AG04450 (cell line): ENCODE measurements at regions of chr14 and their contacts with region 1.

Region 1: GRCh38 chr14:77314043-77314442 is 6.6 kb downstream of the POMT2 start:
- DNase-seq: peak; percentile 76
- H3K4me3 ChIP-seq: no peak overlapping the region
- H3K27ac ChIP-seq: peak overlapping the region; percentile 58
- H3K27me3 ChIP-seq: no peaks in the 10 kb centered on the region
- CTCF ChIP-seq: no peak

Region 2: DNA sequence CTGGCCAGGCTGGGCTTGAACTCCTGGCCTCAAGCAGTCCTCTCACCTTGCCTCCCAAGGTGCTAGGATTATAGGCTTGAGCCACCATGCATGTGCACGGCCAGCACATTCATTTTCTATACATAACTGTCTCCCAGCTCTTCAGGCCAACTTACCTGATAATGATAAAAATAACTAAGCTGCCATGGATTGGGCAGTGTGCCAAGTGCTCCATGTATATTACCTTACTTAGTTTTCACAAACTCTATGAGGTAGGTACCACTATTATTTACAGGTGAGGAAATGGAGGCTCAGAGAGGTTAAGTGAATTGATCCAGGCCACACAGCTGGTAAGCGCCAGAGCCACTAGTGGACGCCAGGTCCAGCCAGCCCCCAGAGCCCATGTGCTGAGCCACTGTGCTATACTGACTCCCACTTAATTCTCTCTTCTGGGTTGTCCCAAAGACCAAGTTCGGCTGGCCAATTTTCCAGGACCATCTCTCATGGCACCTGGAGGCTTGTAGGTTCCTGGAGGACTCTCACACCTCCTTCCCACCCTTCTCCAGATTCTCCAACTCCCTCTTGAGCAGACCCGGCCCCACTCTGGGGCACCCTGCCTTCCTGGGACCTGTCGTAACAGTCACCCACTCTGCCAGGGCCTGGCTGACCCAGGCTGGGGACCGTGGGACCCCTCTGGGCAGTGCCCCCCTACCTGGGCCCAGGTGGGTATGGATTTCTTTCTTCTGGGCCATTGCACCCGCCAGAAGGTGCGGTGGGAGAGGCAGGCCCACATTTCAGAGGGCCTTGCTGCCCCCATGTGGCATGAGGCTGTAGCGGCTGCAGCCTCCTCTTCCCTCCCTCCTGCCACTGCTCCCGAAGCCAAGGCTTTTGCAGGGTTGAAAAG is 246.2 kb before region 1 on chr14:
- CTCF ChIA-PET with region 1: interaction called, 10 read pairs
- POLR2A ChIA-PET with region 1: no interaction called
- DNase-seq: peak; percentile 30
- H3K4me3 ChIP-seq: no peak overlapping the region
- H3K27ac ChIP-seq: no peak overlapping the region
- H3K27me3 ChIP-seq: no peaks in the 10 kb centered on the region
- CTCF ChIP-seq: peak; percentile 90

Region 3: GRCh38 chr14:77268989-77269600 is 44.9 kb before region 1 on chr14:
- CTCF ChIA-PET with region 1: no interaction called
- POLR2A ChIA-PET with region 1: no interaction called
- DNase-seq: no peak
- H3K4me3 ChIP-seq: no peak overlapping the region
- H3K27ac ChIP-seq: no peak overlapping the region
- H3K27me3 ChIP-seq: peaks cover 38% of the 10 kb centered on the region
- CTCF ChIP-seq: no peak

Region 4: DNA sequence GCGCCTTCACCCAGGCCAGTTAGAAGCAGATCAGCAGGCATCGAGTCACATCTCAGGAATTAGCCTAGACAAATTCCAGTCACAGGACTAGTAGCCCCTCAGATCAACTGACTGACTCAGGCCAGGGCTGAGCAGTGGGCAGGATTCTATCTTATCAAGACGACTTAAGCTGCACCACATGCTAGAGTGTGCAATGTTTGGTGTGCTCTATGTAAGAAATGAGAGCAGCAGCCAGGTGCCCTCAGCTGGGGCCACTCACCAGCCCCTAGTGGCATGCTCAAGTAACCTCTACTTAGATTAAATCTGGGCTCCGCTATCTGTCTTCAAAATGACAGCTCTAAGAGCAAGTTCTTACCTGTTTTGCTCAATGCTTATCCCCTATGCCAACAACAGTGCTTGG is 23.3 kb before region 1 on chr14:
- CTCF ChIA-PET with region 1: interaction called, 23 read pairs
- POLR2A ChIA-PET with region 1: no interaction called
- DNase-seq: peak; percentile 10
- H3K4me3 ChIP-seq: no peak overlapping the region
- H3K27ac ChIP-seq: no peak overlapping the region
- H3K27me3 ChIP-seq: no peaks in the 10 kb centered on the region
- CTCF ChIP-seq: no peak

Region 5: DNA sequence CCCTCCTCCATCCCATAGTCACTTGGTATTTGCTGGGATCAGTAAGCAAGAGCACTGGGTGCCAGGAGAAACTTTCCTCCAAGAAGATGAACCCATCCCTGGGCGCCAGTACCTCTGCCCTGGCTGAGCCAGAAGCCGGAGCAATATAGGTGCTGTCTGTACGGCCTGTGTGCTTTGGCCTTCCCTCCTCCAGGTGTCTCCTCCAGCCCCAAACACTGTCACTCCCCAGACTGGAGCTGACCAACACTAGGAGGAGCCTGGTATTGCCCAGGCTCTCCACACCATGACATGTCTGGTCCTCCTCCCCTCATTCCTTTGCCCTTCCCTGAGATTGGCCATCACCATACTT is 11.7 kb after region 1 on chr14:
- CTCF ChIA-PET with region 1: interaction called, 14 read pairs
- POLR2A ChIA-PET with region 1: no interaction called
- DNase-seq: no peak
- H3K4me3 ChIP-seq: no peak overlapping the region
- H3K27ac ChIP-seq: no peak overlapping the region
- H3K27me3 ChIP-seq: no peaks in the 10 kb centered on the region
- CTCF ChIP-seq: no peak

Region 6: DNA sequence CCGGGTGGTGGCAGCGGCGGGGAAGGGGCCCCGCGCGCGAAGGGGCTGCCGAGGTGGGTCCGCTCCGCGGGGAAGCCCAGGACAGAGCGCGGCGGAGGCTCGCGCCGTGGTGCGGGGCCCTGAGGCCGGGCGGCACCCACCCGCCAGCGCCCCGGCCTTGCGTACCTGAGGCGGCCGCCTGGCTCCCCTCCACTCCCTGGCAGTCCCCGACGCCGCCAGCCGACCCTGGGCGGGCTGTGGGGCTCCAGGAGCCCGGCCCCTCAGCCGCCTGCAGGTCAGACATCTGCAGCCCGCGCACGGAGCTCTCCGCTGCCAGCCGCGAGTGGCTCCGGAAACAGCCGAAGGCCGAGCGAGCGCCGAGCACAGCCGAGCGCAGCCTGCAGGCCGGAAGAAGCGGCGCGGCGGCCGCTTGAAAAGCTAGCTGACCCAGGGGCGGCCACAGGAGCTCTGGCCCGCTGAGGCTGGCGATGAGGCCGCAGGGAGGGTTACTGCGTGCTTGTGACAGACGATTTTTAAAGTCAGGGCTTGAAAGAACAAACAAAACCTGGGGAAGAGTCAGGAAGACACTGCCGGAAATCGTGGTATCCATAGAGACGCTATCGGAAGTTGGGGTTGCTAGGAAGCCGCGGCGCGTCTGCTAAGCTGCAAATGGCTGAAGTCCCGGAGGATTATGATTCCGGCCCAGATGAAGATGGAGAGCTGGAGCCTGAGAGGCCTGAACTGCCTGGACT is 62.9 kb after region 1 on chr14 and contains the starts of genes SAMD15 and TMED8:
- CTCF ChIA-PET with region 1: interaction called, 11 read pairs
- POLR2A ChIA-PET with region 1: no interaction called
- DNase-seq: peak; percentile 37
- H3K4me3 ChIP-seq: peak within 1 kb of the TSS; percentile 86
- H3K27ac ChIP-seq: peak within 1 kb of the TSS; percentile 62
- H3K27me3 ChIP-seq: no peaks in the 10 kb centered on the region
- CTCF ChIP-seq: peak; percentile 31
- polyA plus RNA-seq, gene SAMD15: 0.66 and 0.72 TPM in 2 replicates
- polyA plus RNA-seq, gene TMED8: 4.5 and 5.7 TPM in 2 replicates

Region 7: DNA sequence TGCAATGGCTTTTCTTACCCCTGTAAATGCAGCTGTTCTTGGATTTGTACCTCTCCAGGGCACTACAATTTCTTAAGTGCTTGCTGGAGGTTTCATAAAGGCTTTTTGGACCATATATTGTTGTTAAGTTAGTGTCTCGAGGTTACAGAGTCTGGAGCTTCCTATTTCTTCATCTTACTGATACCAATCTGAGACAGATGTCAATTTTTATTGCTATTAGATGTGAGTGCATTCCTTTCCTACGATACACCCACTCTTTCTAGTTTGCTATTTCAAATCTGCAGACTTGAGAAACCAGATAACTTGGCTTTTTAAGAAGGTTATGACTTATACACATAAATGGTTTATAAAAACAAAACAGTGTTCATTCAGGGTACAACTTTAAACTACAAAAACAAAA is 107.2 kb after region 1 on chr14:
- CTCF ChIA-PET with region 1: interaction called, 5 read pairs
- POLR2A ChIA-PET with region 1: interaction called, 10 read pairs
- DNase-seq: no peak
- H3K4me3 ChIP-seq: no peak overlapping the region
- H3K27ac ChIP-seq: no peak overlapping the region
- H3K27me3 ChIP-seq: no peaks in the 10 kb centered on the region
- CTCF ChIP-seq: no peak